ENCODE measurements at regions of chr17 and their contacts with region 1.

Region 1: GRCh38 chr17:29807520-29808351 is 122.3 kb downstream of the SSH2 start:
- DNase-seq: peak in 2 of 3 donors; percentile 41 to 69
- ATAC-seq: peak; percentile 92 to 96 (median 94)
- H3K4me3 ChIP-seq: peak overlapping the region in 2 of 3 donors; percentile 19 to 20
- H3K27ac ChIP-seq: peak overlapping the region in 1 of 3 donors; percentile 32
- H3K4me1 ChIP-seq: no peaks in the 10 kb centered on the region
- H3K27me3 ChIP-seq: no peaks in the 10 kb centered on the region
- CTCF ChIP-seq: peak; percentile 76 to 86 (median 79)
- POLR2A ChIP-seq: no peak

Region 2: DNA sequence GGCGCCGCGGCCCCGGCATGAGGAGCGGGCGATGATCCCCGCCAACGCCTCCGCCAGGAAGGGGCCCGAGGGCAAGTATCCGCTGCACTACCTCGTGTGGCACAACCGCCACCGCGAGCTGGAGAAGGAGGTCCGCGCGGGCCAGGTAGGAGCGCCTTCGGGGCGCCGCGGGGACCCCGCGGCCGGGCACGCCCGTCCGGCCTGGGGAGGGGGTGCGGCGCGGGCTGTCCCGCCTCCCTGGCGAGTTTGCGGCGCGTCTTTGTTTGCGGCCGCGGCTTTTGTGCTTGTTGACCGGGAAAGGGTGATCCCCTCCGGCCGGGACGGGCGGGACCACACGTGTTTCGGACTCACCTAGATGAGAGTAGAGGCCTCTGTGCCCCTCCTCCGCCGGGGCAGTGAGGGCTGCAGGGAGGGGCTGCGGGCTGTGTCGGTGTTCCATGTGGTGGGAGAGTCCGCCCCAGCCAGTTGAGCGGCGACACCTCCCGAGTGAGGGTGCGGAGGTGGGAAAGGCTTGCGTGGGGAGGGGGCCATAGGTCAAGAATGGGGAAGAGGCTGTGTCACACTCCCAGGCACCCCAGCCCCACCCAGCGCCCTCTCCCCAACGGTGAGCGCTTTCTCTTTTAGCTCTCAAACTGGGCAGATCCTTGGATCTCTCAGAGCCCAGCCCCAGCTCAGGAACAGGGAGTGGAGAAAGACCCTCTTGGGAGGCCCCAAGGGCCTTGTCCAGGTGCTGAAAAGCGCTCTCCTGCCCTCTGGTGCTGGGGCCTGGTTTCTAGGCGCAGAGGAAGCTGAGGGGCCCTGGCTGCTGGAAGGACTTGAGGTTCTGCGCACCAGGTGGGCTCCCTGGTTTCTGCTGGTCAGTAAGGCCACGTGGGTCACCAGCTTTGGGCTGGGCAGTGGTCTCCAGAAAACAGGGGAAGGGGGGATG is 213.9 kb before region 1 on chr17:
- intact Hi-C with region 1: no loop called
- DNase-seq: peak in 1 of 3 donors; percentile 50
- ATAC-seq: no peak
- H3K4me3 ChIP-seq: peak overlapping the region; percentile 36 to 55 (median 42)
- H3K27ac ChIP-seq: no peak overlapping the region
- H3K4me1 ChIP-seq: peaks cover 0 to 27% (median 13%) of the 10 kb centered on the region in 4 donors
- H3K27me3 ChIP-seq: no peaks in the 10 kb centered on the region
- CTCF ChIP-seq: peak in 2 of 4 donors; percentile 16 to 19
- POLR2A ChIP-seq: no peak

Region 3: GRCh38 chr17:29931231-29931932 is 123.6 kb after region 1 on chr17:
- intact Hi-C with region 1: loop called in 1 of 2 experiments (anchors 5 kb)
- DNase-seq: peak; percentile 50 to 66 (median 66)
- ATAC-seq: peak; percentile 68 to 81 (median 73)
- H3K4me3 ChIP-seq: peak overlapping the region in 2 of 3 donors; percentile 69 to 79
- H3K27ac ChIP-seq: peak overlapping the region in 1 of 3 donors; percentile 84
- H3K4me1 ChIP-seq: peaks cover 0 to 17% (median 3%) of the 10 kb centered on the region in 4 donors
- H3K27me3 ChIP-seq: no peaks in the 10 kb centered on the region
- CTCF ChIP-seq: peak; percentile 86 to 94 (median 87)
- POLR2A ChIP-seq: no peak

Region 4: GRCh38 chr17:30021708-30022317 is 214.1 kb after region 1 on chr17:
- intact Hi-C with region 1: loop called in 1 of 2 experiments (anchors 10 kb)
- DNase-seq: no peak
- ATAC-seq: peak; percentile 78 to 88 (median 80)
- H3K4me3 ChIP-seq: no peak overlapping the region
- H3K27ac ChIP-seq: no peak overlapping the region
- H3K4me1 ChIP-seq: no peaks in the 10 kb centered on the region
- H3K27me3 ChIP-seq: no peaks in the 10 kb centered on the region
- CTCF ChIP-seq: peak; percentile 71 to 80 (median 78)
- POLR2A ChIP-seq: no peak